PC-9 (cell line): ENCODE measurements at regions of chr5 and their contacts with region 1.

Region 1: GRCh38 chr5:19608444-19609002 is 379.5 kb downstream of the CDH18 start:
- DNase-seq: no peak
- H3K4me3 ChIP-seq: no peak overlapping the region
- H3K27ac ChIP-seq: no peak overlapping the region
- H3K4me1 ChIP-seq: no peaks in the 10 kb centered on the region
- H3K27me3 ChIP-seq: no peaks in the 10 kb centered on the region
- CTCF ChIP-seq: peak; percentile 65

Region 2: GRCh38 chr5:18393589-18394442 is 1214.7 kb before region 1 on chr5:
- CTCF ChIA-PET with region 1: no interaction called
- POLR2A ChIA-PET with region 1: interaction called, 3 read pairs
- intact Hi-C with region 1: loop called (anchors 1 kb)
- DNase-seq: peak in 1 of 2 experiments; percentile 80
- H3K4me3 ChIP-seq: no peak overlapping the region
- H3K27ac ChIP-seq: no peak overlapping the region
- H3K4me1 ChIP-seq: no peaks in the 10 kb centered on the region
- H3K27me3 ChIP-seq: no peaks in the 10 kb centered on the region
- CTCF ChIP-seq: peak; percentile 95

Region 3: DNA sequence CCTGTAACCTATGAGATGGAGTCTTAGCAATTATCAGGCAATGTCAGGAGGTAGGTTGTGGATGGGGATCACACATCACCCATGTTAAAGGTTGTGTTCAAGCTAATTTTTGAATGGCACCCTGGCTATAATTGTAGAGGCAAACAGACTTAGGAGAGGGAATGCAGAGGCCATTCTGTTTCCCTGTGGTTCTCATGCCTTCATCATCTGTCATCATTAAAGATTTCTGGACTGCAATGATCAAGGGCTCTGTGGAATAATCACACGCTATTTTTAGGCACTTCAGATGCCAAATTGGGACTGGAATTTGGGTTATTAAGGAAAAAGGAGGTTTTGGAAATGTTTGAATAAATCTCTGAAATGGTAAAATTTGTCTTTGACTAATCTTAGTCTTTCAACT is 908.8 kb before region 1 on chr5:
- CTCF ChIA-PET with region 1: interaction called, 8 read pairs
- POLR2A ChIA-PET with region 1: no interaction called
- intact Hi-C with region 1: loop called (anchors 5 kb)
- DNase-seq: no peak
- H3K4me3 ChIP-seq: no peak overlapping the region
- H3K27ac ChIP-seq: no peak overlapping the region
- H3K4me1 ChIP-seq: 0 out of 2 replicates have a peak, but pooled peaks cover 4% of the 10 kb centered on the region
- H3K27me3 ChIP-seq: no peaks in the 10 kb centered on the region
- CTCF ChIP-seq: no peak

Region 4: DNA sequence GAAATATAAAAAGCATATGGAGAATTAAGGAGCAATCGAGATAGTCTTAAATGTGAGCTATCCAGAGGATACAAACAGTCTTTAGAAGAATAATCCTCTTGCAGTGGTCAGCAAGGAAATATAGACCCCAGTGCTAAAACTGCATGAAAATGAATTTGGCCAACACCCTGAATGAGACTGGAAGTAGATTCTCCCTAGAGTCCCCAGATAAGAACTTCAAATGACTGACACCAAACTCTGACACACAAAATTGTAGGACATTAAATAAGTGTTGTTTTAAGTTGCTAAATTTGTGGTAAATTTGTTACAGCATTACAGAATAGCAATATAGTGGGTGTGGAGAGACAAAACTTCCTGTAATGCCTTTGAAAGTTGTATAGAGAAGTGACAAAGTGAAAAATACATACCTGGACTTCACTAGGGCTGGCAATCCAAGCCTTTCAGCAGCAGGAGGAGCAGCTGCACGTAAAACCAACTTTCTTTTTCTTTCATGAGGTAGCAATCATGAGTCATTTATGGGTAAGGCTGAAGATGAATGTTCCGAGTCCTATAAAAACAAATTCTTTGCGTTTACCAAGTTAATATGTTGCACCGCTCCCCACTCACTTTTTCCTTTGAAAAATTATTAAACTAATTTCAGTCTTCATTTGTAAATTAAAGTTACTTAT is 836.2 kb before region 1 on chr5:
- CTCF ChIA-PET with region 1: no interaction called
- POLR2A ChIA-PET with region 1: no interaction called
- intact Hi-C with region 1: loop called (anchors 1 kb)
- DNase-seq: peak; percentile 48 to 56
- H3K4me3 ChIP-seq: no peak overlapping the region
- H3K27ac ChIP-seq: no peak overlapping the region
- H3K4me1 ChIP-seq: no peaks in the 10 kb centered on the region
- H3K27me3 ChIP-seq: no peaks in the 10 kb centered on the region
- CTCF ChIP-seq: peak; percentile 55

Region 5: DNA sequence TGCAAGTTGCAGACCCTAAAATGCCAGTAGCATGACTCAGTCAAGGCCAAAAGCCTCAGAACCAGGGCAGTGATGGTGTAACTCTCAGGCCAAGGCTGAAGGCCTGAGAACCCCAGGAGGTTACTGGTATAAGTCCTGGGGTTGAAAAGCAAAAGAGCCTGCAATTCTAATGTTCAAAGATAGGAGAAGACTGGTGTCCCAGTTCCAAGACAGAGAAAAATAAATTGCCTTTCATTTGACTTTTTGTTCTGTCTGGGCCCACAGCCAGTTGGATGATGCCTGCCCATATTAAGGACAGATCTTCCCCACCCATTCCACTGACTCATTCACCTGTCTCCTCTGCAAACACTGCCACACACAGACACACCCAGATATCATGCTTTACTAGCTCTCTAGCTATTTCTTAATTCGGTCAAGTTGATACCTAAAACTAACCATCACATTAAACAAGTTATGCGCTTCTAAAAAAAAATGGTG is 293.6 kb before region 1 on chr5:
- CTCF ChIA-PET with region 1: no interaction called
- POLR2A ChIA-PET with region 1: no interaction called
- intact Hi-C with region 1: loop called (anchors 10 kb)
- DNase-seq: peak; percentile 65 to 87
- H3K4me3 ChIP-seq: no peak overlapping the region
- H3K27ac ChIP-seq: no peak overlapping the region
- H3K4me1 ChIP-seq: 0 out of 2 replicates have a peak, but pooled peaks cover 5% of the 10 kb centered on the region
- H3K27me3 ChIP-seq: no peaks in the 10 kb centered on the region
- CTCF ChIP-seq: peak; percentile 38; the same call in 1 of the 2 replicates